ENCODE measurements at regions of chr2 and their contacts with region 1.

Region 1: DNA sequence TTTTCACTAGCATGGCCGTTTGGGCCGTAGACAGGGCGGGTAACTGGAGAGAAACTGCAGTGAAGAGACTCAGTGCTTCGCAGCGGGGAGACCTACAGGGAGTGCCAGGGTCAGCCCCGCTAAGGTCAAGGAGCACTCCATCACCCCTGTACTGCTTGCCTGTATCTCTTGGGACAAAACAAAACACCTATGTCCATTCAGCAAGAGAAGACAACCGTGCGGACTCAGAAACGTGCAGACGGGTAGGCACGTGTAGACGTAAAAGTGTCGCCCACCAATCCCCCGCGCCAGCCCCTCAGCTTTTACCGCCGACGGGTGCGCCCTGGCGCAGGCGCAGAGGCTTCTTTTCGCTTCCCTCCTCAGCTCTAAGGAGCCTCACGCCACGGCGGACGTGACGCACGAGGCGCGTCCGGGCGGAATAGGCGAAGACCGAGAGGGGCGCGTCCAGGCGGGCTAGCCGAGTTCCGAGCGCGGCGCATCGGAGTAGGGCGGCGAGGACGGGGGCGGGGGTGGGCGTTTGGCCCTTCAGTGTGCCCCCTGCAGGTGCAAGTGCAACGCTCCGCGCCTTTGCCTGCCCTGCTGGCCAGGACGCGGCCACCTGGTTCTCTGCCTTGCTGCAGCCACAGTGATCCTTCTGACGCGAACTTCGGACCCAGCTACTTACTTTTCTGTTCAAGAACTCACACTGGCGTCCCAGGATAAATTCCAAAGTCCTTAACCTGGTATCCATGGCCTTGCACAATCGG is 3.3 kb upstream of the SOS1 start:
- DNase-seq: peak; percentile 89
- ATAC-seq: peak; percentile 77
- H3K4me3 ChIP-seq: peak overlapping the region; percentile 81
- H3K27ac ChIP-seq: peak overlapping the region; percentile 78
- H3K4me1 ChIP-seq: peaks cover 12% of the 10 kb centered on the region
- H3K27me3 ChIP-seq: no peaks in the 10 kb centered on the region
- CTCF ChIP-seq: peak; percentile 39 to 80 (median 58); a peak in 5 of 6 replicates
- EP300 ChIP-seq: peak; percentile 22 to 71; a peak in 2 of 4 replicates
- POLR2A ChIP-seq: peak; percentile 82
- RAD21 ChIP-seq: peak; percentile 36; the same call in 1 of the 2 replicates

Region 2: GRCh38 chr2:38947240-38948239 is 176.6 kb before region 1 on chr2:
- CTCF ChIA-PET with region 1: interaction called, 21 read pairs
- POLR2A ChIA-PET with region 1: no interaction called
- RAD21 ChIA-PET with region 1: interaction called, 6 read pairs
- SMC1A ChIA-PET with region 1: interaction called, 5 read pairs
- in situ Hi-C with region 1: no loop called
- intact Hi-C with region 1: no loop called
- DNase-seq: peak; percentile 16
- ATAC-seq: peak; percentile 98
- H3K4me3 ChIP-seq: no peak overlapping the region
- H3K27ac ChIP-seq: no peak overlapping the region
- H3K4me1 ChIP-seq: no peaks in the 10 kb centered on the region
- H3K27me3 ChIP-seq: no peaks in the 10 kb centered on the region
- CTCF ChIP-seq: peak; percentile 72 to 77 (median 74)
- EP300 ChIP-seq: no peak
- POLR2A ChIP-seq: no peak
- RAD21 ChIP-seq: peak; percentile 74

Region 3: GRCh38 chr2:39059366-39059952 is 64.7 kb before region 1 on chr2:
- CTCF ChIA-PET with region 1: interaction called, 35 read pairs
- POLR2A ChIA-PET with region 1: no interaction called
- RAD21 ChIA-PET with region 1: interaction called, 41 read pairs
- SMC1A ChIA-PET with region 1: interaction called, 58 read pairs
- in situ Hi-C with region 1: no loop called
- intact Hi-C with region 1: loop called (anchors 2 kb)
- DNase-seq: no peak
- ATAC-seq: peak; percentile 73
- H3K4me3 ChIP-seq: no peak overlapping the region
- H3K27ac ChIP-seq: no peak overlapping the region
- H3K4me1 ChIP-seq: no peaks in the 10 kb centered on the region
- H3K27me3 ChIP-seq: no peaks in the 10 kb centered on the region
- CTCF ChIP-seq: peak; percentile 44 to 68 (median 54); a peak in 5 of 6 replicates
- EP300 ChIP-seq: no peak
- POLR2A ChIP-seq: no peak
- RAD21 ChIP-seq: peak; percentile 74

Region 4: GRCh38 chr2:39094852-39095306 is 29.3 kb before region 1 on chr2:
- CTCF ChIA-PET with region 1: interaction called, 28 read pairs
- POLR2A ChIA-PET with region 1: interaction called, 30 read pairs
- RAD21 ChIA-PET with region 1: interaction called, 11 read pairs
- SMC1A ChIA-PET with region 1: interaction called, 47 read pairs
- in situ Hi-C with region 1: no loop called
- intact Hi-C with region 1: no loop called
- DNase-seq: peak; percentile 71
- ATAC-seq: peak; percentile 76
- H3K4me3 ChIP-seq: peak overlapping the region; percentile 22; the same call in 1 of the 2 replicates
- H3K27ac ChIP-seq: peak overlapping the region; percentile 77
- H3K4me1 ChIP-seq: peaks cover 38% of the 10 kb centered on the region
- H3K27me3 ChIP-seq: no peaks in the 10 kb centered on the region
- CTCF ChIP-seq: no peak
- EP300 ChIP-seq: 0 out of 4 replicates have a peak, but pooled peaks of 1 of the 2 experiments have one; percentile 30
- POLR2A ChIP-seq: no peak
- RAD21 ChIP-seq: no peak

Region 5: DNA sequence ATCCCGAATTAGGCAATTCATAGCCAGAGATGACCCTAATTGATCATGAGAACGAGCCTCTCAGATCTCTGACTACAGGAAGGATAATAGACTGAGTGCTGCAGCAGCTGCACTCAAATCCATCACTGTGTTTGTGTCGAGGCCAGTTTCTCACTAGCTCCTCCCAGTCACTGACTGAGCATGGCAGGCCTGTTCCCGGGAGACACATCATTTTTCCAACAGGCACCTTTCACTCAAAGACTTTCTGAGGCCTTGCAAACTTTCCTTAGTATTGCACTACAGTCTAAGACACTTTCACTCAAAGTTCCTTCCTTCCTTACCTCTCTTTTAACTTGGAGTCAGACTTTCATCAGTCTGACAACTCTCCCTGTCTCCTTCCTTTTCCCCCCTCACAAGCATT is 17.0 kb before region 1 on chr2:
- CTCF ChIA-PET with region 1: interaction called, 7 read pairs
- POLR2A ChIA-PET with region 1: interaction called, 6 read pairs
- RAD21 ChIA-PET with region 1: interaction called, 4 read pairs
- SMC1A ChIA-PET with region 1: interaction called, 15 read pairs
- in situ Hi-C with region 1: no loop called
- intact Hi-C with region 1: no loop called
- DNase-seq: no peak
- ATAC-seq: 0 out of 3 replicates have a peak, but pooled peaks have one; percentile 30
- H3K4me3 ChIP-seq: no peak overlapping the region
- H3K27ac ChIP-seq: no peak overlapping the region
- H3K4me1 ChIP-seq: peaks cover 9% of the 10 kb centered on the region; the same call in 1 of the 2 replicates
- H3K27me3 ChIP-seq: no peaks in the 10 kb centered on the region
- CTCF ChIP-seq: no peak
- EP300 ChIP-seq: no peak
- POLR2A ChIP-seq: no peak
- RAD21 ChIP-seq: no peak

Region 6: DNA sequence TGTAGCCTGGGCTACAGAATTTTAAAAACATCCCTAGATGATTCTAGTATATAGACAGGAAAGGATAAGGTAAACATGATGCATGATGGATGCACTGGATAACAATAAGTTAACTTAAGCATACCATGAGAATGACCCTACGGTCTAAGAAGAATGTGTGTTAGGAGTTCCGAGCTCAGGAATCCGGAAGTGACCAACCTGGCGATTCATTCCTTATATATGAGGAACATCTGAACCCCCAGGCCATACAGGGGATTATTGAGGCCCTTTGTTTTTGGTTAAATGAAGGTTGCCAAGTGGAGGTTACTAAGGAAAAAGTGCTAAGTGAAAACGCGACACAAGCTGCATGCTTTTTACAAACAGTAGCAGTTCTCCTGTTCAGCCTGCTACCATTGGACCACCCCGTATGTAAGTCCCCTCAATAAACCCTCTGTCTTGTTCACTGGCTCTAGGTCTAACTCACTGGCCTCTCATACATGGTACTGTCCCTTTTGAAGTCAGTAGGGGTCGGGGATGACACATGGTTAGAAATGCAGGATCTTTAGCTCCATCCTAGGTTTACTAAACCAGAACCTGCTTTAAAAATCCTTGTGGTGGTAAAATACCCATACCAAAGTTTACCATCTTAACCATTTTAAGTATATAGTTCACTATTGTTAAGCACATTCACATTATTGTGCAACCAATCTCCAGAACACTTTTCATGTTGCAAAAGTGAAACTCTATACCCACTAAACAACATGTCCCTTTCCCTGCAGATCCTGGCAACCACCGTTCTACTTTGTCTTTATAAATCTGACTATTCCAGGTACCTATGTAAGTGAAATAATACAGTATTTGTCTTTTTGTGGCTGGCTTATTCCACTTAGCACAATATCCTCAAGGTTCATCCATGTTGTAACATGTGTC is 423.9 kb after region 1 on chr2:
- CTCF ChIA-PET with region 1: no interaction called
- POLR2A ChIA-PET with region 1: no interaction called
- RAD21 ChIA-PET with region 1: no interaction called
- SMC1A ChIA-PET with region 1: no interaction called
- in situ Hi-C with region 1: no loop called
- intact Hi-C with region 1: no loop called
- DNase-seq: no peak
- ATAC-seq: no peak
- H3K4me3 ChIP-seq: no peak overlapping the region
- H3K27ac ChIP-seq: no peak overlapping the region
- H3K4me1 ChIP-seq: no peaks in the 10 kb centered on the region
- H3K27me3 ChIP-seq: no peaks in the 10 kb centered on the region
- CTCF ChIP-seq: no peak
- EP300 ChIP-seq: no peak
- POLR2A ChIP-seq: no peak
- RAD21 ChIP-seq: no peak